ENCODE measurements at regions of chr1 and their contacts with region 1.

Region 1: DNA sequence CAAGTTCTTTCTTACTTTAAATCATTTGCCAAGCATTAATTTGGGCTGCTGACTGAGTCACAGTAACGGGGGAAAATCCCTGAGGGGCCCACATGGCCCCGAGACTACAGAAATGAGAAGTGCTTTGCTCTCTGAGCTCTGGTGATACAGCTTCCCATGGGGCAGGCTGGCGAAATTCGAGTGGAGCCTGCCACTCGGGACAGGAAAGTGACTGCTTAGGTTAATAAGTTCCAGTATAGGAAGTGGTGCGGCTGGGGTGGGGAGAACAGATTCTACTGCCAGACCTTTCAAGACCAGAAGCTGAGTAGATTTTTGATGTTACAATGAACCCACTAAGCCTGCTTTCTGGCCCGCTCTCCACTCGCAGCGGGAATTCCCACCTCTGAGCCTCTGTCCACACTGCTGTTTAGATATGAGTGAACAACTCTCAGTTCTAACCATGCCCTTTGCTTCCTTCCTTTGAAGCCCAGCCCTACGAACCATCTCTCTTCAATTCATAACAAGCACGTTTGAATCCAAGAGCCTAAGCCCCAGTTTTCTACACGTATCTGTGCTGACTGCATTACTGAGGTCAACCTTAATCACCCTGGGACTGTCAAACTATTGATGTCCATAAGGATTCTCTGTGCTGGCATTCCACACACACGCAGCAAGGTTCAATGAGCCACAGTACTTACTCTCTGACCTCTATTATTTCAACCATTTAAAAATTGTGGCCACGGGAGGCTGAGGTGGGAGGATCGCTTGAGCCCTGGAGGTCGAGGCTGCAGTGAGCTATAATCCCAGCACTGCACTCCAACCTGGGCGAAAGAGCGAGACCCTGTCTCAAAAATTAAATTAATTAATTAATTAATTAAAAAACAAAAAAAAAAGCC is 9.6 kb downstream of the ZBTB17 start:
- DNase-seq: peak; percentile 93
- ATAC-seq: peak; percentile 79
- H3K4me3 Mint-ChIP-seq: peak overlapping the region; percentile 54
- H3K27ac Mint-ChIP-seq: peak overlapping the region; percentile 98
- H3K4me1 Mint-ChIP-seq: peaks cover 83% of the 10 kb centered on the region
- H3K27me3 Mint-ChIP-seq: no peaks in the 10 kb centered on the region

Region 2: DNA sequence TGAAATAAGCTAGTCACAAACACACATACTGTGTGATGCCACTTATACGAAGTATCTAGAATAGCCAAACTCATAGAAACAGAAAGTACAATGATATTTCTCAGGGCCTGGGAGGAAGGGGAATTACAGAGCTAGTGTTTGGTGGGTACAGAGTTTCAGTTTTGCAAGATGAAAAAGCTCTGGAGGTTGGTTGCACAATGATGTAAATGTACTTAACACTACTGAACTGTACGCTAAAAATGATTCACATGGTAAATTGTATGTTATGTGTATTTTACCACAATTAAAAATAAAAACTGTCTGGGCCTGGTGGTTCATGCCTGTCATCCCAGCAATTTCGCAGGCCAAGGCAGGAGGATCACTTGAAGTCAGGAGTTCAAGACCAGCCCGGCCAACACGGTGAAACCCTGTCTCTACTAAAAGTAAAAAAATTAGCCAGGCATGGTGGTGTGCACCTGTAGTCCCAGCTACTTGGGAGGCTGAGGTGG is 734.6 kb before region 1 on chr1:
- CTCF ChIA-PET with region 1: no interaction called
- POLR2A ChIA-PET with region 1: no interaction called
- intact Hi-C with region 1: loop called in 1 of 2 experiments (anchors 10 kb)
- DNase-seq: peak; percentile 42
- ATAC-seq: peak; percentile 99
- H3K4me3 Mint-ChIP-seq: no peak overlapping the region
- H3K27ac Mint-ChIP-seq: no peak overlapping the region
- H3K4me1 Mint-ChIP-seq: peaks cover 18% of the 10 kb centered on the region
- H3K27me3 Mint-ChIP-seq: peaks cover 18% of the 10 kb centered on the region

Region 3: DNA sequence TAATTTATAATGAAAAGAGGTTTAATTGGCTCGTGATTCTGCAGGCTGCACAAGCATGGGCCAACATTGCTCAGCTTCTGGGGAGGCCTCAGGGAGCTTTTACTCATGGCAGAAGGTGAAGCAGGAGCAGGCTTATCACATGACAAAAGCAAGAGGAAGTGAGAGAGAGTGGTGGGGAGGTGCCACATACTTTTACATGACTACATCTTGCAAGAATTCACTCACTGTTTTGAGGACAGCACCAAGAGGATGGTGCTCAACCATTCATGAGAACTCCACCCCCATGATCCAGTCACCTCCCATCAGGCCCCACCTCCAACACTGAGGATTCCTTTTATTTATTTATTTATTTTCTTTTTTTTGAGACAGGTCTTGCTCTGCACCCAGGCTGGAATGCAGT is 287.7 kb before region 1 on chr1:
- CTCF ChIA-PET with region 1: interaction called, 3 read pairs
- POLR2A ChIA-PET with region 1: no interaction called
- intact Hi-C with region 1: loop called in 1 of 2 experiments (anchors 2 kb)
- DNase-seq: peak; percentile 32
- ATAC-seq: peak; percentile 79
- H3K4me3 Mint-ChIP-seq: no peak overlapping the region
- H3K27ac Mint-ChIP-seq: no peak overlapping the region
- H3K4me1 Mint-ChIP-seq: peaks cover 25% of the 10 kb centered on the region
- H3K27me3 Mint-ChIP-seq: no peaks in the 10 kb centered on the region

Region 4: GRCh38 chr1:15949453-15950245 is 16.7 kb before region 1 on chr1:
- CTCF ChIA-PET with region 1: interaction called, 8 read pairs
- POLR2A ChIA-PET with region 1: interaction called, 77 read pairs
- intact Hi-C with region 1: loop called (anchors 1 kb)
- DNase-seq: peak; percentile 94
- ATAC-seq: peak; percentile 75
- H3K4me3 Mint-ChIP-seq: peak overlapping the region; percentile 61
- H3K27ac Mint-ChIP-seq: peak overlapping the region; percentile 95
- H3K4me1 Mint-ChIP-seq: peaks cover 74% of the 10 kb centered on the region
- H3K27me3 Mint-ChIP-seq: no peaks in the 10 kb centered on the region